Ovary (tissue), 10 donors: ENCODE measurements at regions of chr5 and their contacts with region 1.

Region 1: GRCh38 chr5:43120720-43121564 is at the start of gene ZNF131:
- DNase-seq: peak; percentile 95 to 98 (median 97)
- H3K4me3 ChIP-seq: peak within 1 kb of the TSS; percentile 93
- H3K27ac ChIP-seq: peak within 1 kb of the TSS; percentile 97 to 99
- H3K4me1 ChIP-seq: peaks cover 1% of the 10 kb centered on the region
- H3K27me3 ChIP-seq: no peaks in the 10 kb centered on the region
- CTCF ChIP-seq: peak in 1 of 3 donors; percentile 5
- EP300 ChIP-seq: no peak
- POLR2A ChIP-seq: peak; percentile 63
- total RNA-seq, gene ZNF131: 25.6 to 50.2 (median 37.3) TPM

Region 2: DNA sequence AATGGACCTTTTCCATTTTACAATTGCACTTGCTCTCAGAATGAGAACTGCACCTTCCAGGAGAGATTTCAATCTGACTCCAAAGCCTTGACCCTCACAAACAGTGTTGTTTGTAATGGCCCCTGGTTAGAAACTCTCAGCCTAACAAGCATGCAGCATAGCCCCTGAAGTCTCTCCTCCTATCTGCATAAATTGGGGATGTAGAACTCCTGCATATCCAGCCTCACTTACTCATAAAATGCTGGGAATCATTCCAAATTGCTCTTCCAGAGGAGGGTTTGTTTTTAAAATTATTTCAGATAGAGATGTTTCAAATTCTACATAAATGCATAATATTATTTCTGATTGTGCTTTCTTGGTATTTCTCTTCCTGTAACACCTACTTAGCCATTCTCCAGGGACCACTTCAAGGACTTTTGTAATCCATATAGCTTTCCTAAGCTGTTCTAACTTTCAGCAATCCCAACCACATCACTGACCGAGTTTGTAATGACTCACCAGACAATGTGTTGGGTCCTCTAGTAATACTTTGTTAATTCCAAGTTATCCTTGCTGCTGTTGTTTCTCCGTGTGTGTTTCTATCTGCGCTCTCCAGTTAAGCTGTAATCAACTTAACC is 508.1 kb before region 1 on chr5:
- intact Hi-C with region 1: no loop called
- DNase-seq: no peak
- H3K4me3 ChIP-seq: no peak overlapping the region
- H3K27ac ChIP-seq: no peak overlapping the region
- H3K4me1 ChIP-seq: peaks cover 6% of the 10 kb centered on the region
- H3K27me3 ChIP-seq: no peaks in the 10 kb centered on the region
- CTCF ChIP-seq: no peak
- EP300 ChIP-seq: no peak
- POLR2A ChIP-seq: no peak

Region 3: GRCh38 chr5:43313035-43313853 is 192.3 kb after region 1 on chr5 and contains the start of gene HMGCS1:
- intact Hi-C with region 1: loop called in 2 of 4 experiments (anchors 5 to 10 kb)
- DNase-seq: peak; percentile 97 to 99 (median 98)
- H3K4me3 ChIP-seq: peak within 1 kb of the TSS; percentile 68
- H3K27ac ChIP-seq: peak within 1 kb of the TSS; percentile 62 to 71
- H3K4me1 ChIP-seq: peaks cover 5% of the 10 kb centered on the region
- H3K27me3 ChIP-seq: no peaks in the 10 kb centered on the region
- CTCF ChIP-seq: no peak
- EP300 ChIP-seq: no peak
- POLR2A ChIP-seq: peak; percentile 88
- total RNA-seq, gene HMGCS1: 22.1 to 248 (median 33.6) TPM